T-cell (primary cell): ENCODE measurements at regions of chr6 and their contacts with region 1.

Region 1: GRCh38 chr6:3125815-3126214 is 7.3 kb downstream of the BPHL start:
- DNase-seq: no peak
- ATAC-seq: no peak
- H3K4me3 ChIP-seq: no peak overlapping the region
- H3K4me3 Mint-ChIP-seq: no peak overlapping the region
- H3K27ac ChIP-seq: no peak overlapping the region
- H3K27ac Mint-ChIP-seq: no peak overlapping the region
- H3K4me1 ChIP-seq: peaks cover 0 to 6% of the 10 kb centered on the region in 2 experiments
- H3K4me1 Mint-ChIP-seq: peaks cover 0 to 2% (median 0%) of the 10 kb centered on the region in 3 donors
- H3K27me3 ChIP-seq: no peaks in the 10 kb centered on the region
- H3K27me3 Mint-ChIP-seq: no peaks in the 10 kb centered on the region

Region 2: DNA sequence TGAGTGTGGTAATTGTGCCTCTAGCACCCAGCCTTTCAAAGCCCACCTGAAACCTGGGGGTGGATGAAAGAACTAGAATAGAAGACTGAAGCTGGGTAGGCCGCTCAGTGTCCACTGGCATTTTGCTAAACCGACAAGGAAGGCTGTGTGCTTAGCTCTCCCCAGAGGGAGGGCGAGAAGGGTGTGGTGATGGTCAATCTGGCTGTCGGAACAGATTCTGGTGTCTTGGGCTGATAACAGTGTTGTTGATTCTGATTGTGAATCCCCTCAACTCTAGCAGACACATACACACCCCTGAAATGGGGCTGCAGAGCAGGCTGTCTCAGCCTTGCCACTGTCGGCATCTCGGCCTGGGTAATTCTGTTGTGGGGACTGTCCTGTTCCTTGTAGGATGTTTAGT is 11.4 kb before region 1 on chr6:
- CTCF ChIA-PET with region 1: no interaction called
- POLR2A ChIA-PET with region 1: no interaction called
- DNase-seq: no peak
- ATAC-seq: no peak
- H3K4me3 ChIP-seq: no peak overlapping the region
- H3K4me3 Mint-ChIP-seq: no peak overlapping the region
- H3K27ac ChIP-seq: no peak overlapping the region
- H3K27ac Mint-ChIP-seq: no peak overlapping the region
- H3K4me1 ChIP-seq: peaks cover 0 to 11% of the 10 kb centered on the region in 2 experiments
- H3K4me1 Mint-ChIP-seq: peaks cover 13% of the 10 kb centered on the region in 3 donors
- H3K27me3 ChIP-seq: no peaks in the 10 kb centered on the region
- H3K27me3 Mint-ChIP-seq: no peaks in the 10 kb centered on the region

Region 3: DNA sequence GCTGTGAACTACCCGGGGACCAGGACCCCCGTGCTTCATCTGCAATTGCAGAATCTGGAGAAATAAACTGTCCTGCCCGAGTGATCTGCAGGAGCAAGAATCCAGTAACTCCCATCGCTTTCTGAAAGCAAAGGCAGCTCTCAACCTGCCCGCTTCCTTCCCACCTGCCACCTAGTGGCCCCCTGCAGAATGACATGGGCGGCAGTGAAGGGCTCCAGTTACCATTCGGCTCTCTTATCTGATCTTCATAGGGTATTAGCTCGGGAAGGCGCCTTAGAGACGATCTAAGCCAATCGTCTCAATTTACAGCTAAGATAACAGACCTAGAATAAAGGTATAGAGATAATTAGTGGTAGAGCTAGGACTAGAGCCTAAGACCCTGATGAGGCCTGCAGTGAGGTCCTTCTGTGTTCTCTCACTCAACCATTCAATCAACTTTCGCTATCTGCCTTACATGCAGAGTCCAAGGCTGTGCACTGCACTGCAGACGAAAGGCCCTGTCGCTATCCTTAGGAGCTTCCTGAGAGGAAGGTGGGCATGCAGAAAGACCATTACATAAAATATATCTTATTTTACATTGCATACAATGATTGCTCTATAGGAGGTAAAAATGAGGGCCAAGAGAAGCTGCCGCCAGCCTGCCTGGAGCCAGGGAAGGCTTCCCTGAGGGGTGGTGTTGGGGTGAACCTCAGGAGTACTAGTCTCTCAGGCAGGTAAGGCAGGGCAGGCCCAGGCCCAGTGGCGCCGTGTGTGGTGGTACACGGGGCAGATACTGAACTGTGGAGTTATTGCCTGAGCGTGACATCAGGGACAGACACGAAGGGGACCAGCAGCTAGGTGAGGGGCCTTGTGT is 125.9 kb after region 1 on chr6:
- CTCF ChIA-PET with region 1: interaction called, 6 to 13 read pairs
- POLR2A ChIA-PET with region 1: no interaction called
- DNase-seq: peak; percentile 49 to 86 (median 73)
- ATAC-seq: peak; percentile 92 to 96 (median 94)
- H3K4me3 ChIP-seq: no peak overlapping the region
- H3K4me3 Mint-ChIP-seq: peak overlapping the region in 1 of 3 donors; percentile 11
- H3K27ac ChIP-seq: no peak overlapping the region
- H3K27ac Mint-ChIP-seq: no peak overlapping the region
- H3K4me1 ChIP-seq: peaks cover 0 to 9% of the 10 kb centered on the region in 2 experiments
- H3K4me1 Mint-ChIP-seq: peaks cover 6 to 17% (median 6%) of the 10 kb centered on the region in 3 donors
- H3K27me3 ChIP-seq: peaks cover 0 to 50% of the 10 kb centered on the region in 2 experiments
- H3K27me3 Mint-ChIP-seq: peaks cover 11 to 39% of the 10 kb centered on the region in 2 donors

Region 4: DNA sequence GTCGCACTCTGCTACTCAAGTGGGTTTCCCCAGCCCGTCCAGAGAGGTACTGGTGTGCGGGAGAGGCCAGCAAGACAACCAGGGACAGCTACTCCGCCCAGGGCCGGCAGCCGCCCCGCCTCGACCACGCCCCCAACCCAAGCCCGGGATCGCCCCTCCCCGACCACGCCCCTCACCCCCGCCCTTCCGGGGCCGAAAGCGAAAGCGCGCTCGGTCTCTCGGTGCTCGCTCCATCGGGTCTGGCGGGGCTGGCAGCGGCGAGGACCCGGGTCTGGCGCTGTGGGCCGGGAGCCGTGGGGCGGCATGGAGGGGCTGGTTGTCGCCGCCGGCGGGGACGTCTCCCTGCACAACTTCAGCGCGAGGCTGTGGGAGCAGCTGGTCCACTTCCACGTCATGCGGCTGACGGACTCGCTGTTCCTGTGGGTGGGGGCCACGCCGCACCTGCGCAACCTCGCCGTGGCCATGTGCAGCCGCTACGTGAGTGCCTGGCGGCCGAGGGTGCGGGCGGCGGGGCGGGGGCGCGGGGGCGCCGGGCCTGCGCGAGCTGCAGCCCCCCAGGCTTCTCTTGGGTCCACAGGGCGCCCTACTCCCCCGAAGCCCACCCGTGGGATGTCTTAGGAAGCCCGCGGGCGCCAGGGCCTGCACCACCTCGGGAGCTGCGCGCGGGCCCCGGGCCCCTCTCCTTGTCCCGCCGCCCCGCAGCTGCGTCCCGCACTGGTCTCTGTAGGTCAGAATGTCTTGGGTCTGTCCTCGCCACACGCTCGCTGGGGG is 133.1 kb after region 1 on chr6 and contains the start of gene PSMG4:
- CTCF ChIA-PET with region 1: interaction called in 1 of 2 experiments, 15 read pairs
- POLR2A ChIA-PET with region 1: no interaction called
- DNase-seq: peak; percentile 68 to 94 (median 87)
- ATAC-seq: peak; percentile 82 to 87 (median 85)
- H3K4me3 ChIP-seq: peak within 1 kb of the TSS; percentile 69 to 77
- H3K4me3 Mint-ChIP-seq: peak within 1 kb of the TSS; percentile 91 to 94 (median 93)
- H3K27ac ChIP-seq: no peak within 1 kb of the TSS
- H3K27ac Mint-ChIP-seq: peak within 1 kb of the TSS; percentile 77 to 90
- H3K4me1 ChIP-seq: peaks cover 12 to 51% of the 10 kb centered on the region in 2 experiments
- H3K4me1 Mint-ChIP-seq: peaks cover 42 to 47% (median 44%) of the 10 kb centered on the region in 3 donors
- H3K27me3 ChIP-seq: peaks cover 0 to 12% of the 10 kb centered on the region in 2 experiments
- H3K27me3 Mint-ChIP-seq: peaks cover 0 to 3% of the 10 kb centered on the region in 2 donors
- total RNA-seq, gene PSMG4: 18.8 to 42.6 (median 33.6) TPM

Region 5: DNA sequence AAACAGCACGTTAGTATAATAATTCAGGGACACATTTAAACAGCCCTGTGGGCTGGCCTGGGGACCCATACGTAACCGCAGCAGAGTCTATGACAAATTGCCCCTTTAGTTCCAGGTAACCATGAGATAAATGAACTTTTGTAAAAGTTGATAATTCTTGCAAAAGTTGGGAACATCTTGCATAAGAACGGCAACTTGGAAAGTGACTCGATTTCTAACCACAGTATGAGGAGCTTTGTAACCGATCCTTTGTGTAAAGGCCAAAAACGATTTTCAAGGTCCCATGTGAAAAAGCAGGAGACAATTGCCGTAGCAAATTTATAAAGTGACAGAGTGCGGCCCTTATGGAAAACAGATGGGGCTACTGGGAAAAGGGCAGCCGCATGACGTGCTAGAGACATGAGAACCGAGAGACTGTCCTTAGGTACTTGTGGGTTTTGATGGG is 214.6 kb after region 1 on chr6:
- CTCF ChIA-PET with region 1: interaction called in 1 of 2 experiments, 11 read pairs
- POLR2A ChIA-PET with region 1: no interaction called
- DNase-seq: no peak
- ATAC-seq: no peak
- H3K4me3 ChIP-seq: no peak overlapping the region
- H3K4me3 Mint-ChIP-seq: no peak overlapping the region
- H3K27ac ChIP-seq: no peak overlapping the region
- H3K27ac Mint-ChIP-seq: no peak overlapping the region
- H3K4me1 ChIP-seq: peaks cover 0 to 5% of the 10 kb centered on the region in 2 experiments
- H3K4me1 Mint-ChIP-seq: peaks cover 18 to 29% (median 26%) of the 10 kb centered on the region in 3 donors
- H3K27me3 ChIP-seq: peaks cover 0 to 2% of the 10 kb centered on the region in 2 experiments
- H3K27me3 Mint-ChIP-seq: peaks cover 0 to 3% of the 10 kb centered on the region in 2 donors

Region 6: DNA sequence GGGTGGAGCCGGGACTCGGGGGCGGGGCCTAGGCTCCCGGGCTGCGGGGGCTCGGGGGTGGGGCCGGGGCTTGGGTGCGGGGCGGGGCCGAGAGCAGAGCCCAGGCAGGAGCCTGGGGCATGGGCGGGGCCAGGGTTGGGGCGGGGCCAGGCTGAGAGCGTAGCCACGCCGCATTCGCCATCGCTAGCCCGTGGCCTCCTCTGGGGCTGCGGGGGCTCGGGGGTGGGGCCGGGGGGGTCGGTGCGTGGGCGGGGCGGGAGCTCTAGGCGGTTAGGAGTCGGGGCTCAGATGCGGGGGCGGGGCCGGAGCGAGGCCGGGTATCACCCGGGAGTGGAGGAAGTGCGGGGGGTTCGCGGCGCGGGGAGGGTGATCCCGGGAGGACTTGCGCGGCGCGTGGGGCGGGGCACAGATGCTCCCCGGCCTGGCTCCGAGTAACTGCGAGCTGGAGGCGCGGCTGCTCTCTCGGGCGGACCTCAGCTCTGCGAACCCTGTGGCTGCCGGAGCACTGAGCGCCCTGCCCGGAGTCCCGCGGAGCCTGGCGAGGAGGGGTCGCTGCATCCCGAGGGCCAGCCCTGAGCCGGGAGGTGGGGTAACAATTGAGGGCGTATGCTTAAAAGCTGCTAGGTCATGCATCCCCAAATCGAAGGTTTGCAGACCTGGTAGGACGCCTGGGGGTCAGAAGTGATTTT is 1010.0 kb after region 1 on chr6:
- CTCF ChIA-PET with region 1: no interaction called
- POLR2A ChIA-PET with region 1: interaction called in 1 of 2 experiments, 11 read pairs
- DNase-seq: peak; percentile 78 to 97 (median 91)
- ATAC-seq: peak; percentile 87 to 92 (median 90)
- H3K4me3 ChIP-seq: peak overlapping the region; percentile 58 to 74
- H3K4me3 Mint-ChIP-seq: peak overlapping the region; percentile 80 to 91 (median 86)
- H3K27ac ChIP-seq: peak overlapping the region; percentile 27
- H3K27ac Mint-ChIP-seq: peak overlapping the region; percentile 82 to 89
- H3K4me1 ChIP-seq: peaks cover 12 to 17% of the 10 kb centered on the region in 2 experiments
- H3K4me1 Mint-ChIP-seq: peaks cover 38 to 48% (median 44%) of the 10 kb centered on the region in 3 donors
- H3K27me3 ChIP-seq: no peaks in the 10 kb centered on the region
- H3K27me3 Mint-ChIP-seq: no peaks in the 10 kb centered on the region